Activated CD4-positive, alpha-beta T cell treated with anti-CD3 and anti-CD28 coated beads for 36 hours (primary cell): ENCODE measurements at regions of chr19 and their contacts with region 1.

Region 1: DNA sequence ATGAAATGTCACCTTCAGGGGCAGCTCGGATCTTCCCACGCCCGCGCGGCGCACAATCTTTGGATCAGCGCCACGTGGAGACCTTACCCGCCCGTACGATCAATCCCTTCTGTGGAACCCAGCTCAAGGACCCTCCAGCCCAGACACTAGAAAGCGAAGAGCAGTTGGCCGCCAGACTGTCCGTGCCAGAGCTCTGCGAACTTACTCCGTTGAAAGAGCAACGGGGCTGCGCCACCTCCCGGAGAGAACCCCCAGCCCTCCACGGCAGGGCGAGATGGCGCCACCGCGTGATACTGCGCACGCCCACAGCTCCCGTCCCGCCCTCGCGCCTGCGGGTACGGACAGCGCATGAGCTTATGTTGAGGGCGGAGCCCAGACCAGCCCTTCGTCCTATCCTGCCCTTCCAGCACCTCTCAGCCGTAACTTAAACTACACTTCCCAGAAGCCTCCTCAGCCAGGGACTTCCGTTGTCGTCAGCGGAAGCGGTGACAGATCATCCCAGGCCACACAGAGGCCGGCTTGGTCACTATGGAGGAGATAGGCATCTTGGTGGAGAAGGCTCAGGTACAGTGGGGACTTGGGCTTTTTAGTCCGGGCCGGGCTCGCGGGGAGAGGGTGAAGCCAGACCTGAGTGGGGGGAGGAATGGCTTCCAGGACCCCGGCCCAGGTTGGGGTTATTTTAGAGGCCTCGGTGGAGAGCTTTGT is at the start of gene PSMC4:
- DNase-seq: peak; percentile 99
- ATAC-seq: peak; percentile 95
- H3K4me3 Mint-ChIP-seq: peak within 1 kb of the TSS; percentile 89
- H3K27ac Mint-ChIP-seq: peak within 1 kb of the TSS; percentile 96
- H3K4me1 Mint-ChIP-seq: peaks cover 47% of the 10 kb centered on the region
- H3K27me3 Mint-ChIP-seq: no peaks in the 10 kb centered on the region
- total RNA-seq, gene PSMC4: 114 to 140 TPM

Region 2: GRCh38 chr19:39296055-39296645 is 674.7 kb before region 1 on chr19 and contains the start of gene IFNL1:
- CTCF ChIA-PET with region 1: no interaction called
- POLR2A ChIA-PET with region 1: no interaction called
- intact Hi-C with region 1: no loop called
- DNase-seq: peak; percentile 39
- ATAC-seq: no peak
- H3K4me3 Mint-ChIP-seq: no peak within 1 kb of the TSS
- H3K27ac Mint-ChIP-seq: peak within 1 kb of the TSS; percentile 26
- H3K4me1 Mint-ChIP-seq: peaks cover 9% of the 10 kb centered on the region
- H3K27me3 Mint-ChIP-seq: peaks cover 4% of the 10 kb centered on the region
- total RNA-seq, gene IFNL1: 0.50 to 0.51 TPM

Region 3: GRCh38 chr19:39778763-39779162 is 192.1 kb before region 1 on chr19 and contains the start of gene LEUTX:
- CTCF ChIA-PET with region 1: no interaction called
- POLR2A ChIA-PET with region 1: no interaction called
- intact Hi-C with region 1: no loop called
- DNase-seq: peak; percentile 44
- ATAC-seq: peak; percentile 78
- H3K4me3 Mint-ChIP-seq: no peak within 1 kb of the TSS
- H3K27ac Mint-ChIP-seq: no peak within 1 kb of the TSS
- H3K4me1 Mint-ChIP-seq: no peaks in the 10 kb centered on the region
- H3K27me3 Mint-ChIP-seq: peaks cover 22% of the 10 kb centered on the region
- total RNA-seq, gene LEUTX: not detected

Region 4: GRCh38 chr19:39792999-39793546 is 177.8 kb before region 1 on chr19:
- CTCF ChIA-PET with region 1: interaction called, 6 read pairs
- POLR2A ChIA-PET with region 1: no interaction called
- intact Hi-C with region 1: loop called in 1 of 2 experiments (anchors 2 kb)
- DNase-seq: peak; percentile 87
- ATAC-seq: peak; percentile 97
- H3K4me3 Mint-ChIP-seq: peak overlapping the region; percentile 68
- H3K27ac Mint-ChIP-seq: no peak overlapping the region
- H3K4me1 Mint-ChIP-seq: no peaks in the 10 kb centered on the region
- H3K27me3 Mint-ChIP-seq: peaks cover 5% of the 10 kb centered on the region

Region 5: GRCh38 chr19:39833464-39834286 is 137.2 kb before region 1 on chr19 and contains the start of gene DYRK1B:
- CTCF ChIA-PET with region 1: no interaction called
- POLR2A ChIA-PET with region 1: no interaction called
- intact Hi-C with region 1: loop called in 1 of 2 experiments (anchors 1 kb)
- DNase-seq: peak; percentile 99
- ATAC-seq: peak; percentile 92
- H3K4me3 Mint-ChIP-seq: peak within 1 kb of the TSS; percentile 64
- H3K27ac Mint-ChIP-seq: peak within 1 kb of the TSS; percentile 84
- H3K4me1 Mint-ChIP-seq: peaks cover 25% of the 10 kb centered on the region
- H3K27me3 Mint-ChIP-seq: no peaks in the 10 kb centered on the region
- total RNA-seq, gene DYRK1B: 4.8 to 6.9 TPM

Region 6: GRCh38 chr19:39889872-39890545 is 80.8 kb before region 1 on chr19:
- CTCF ChIA-PET with region 1: interaction called, 6 read pairs
- POLR2A ChIA-PET with region 1: no interaction called
- intact Hi-C with region 1: loop called (anchors 5 to 10 kb)
- DNase-seq: no peak
- ATAC-seq: no peak
- H3K4me3 Mint-ChIP-seq: no peak overlapping the region
- H3K27ac Mint-ChIP-seq: no peak overlapping the region
- H3K4me1 Mint-ChIP-seq: no peaks in the 10 kb centered on the region
- H3K27me3 Mint-ChIP-seq: no peaks in the 10 kb centered on the region

Region 7: GRCh38 chr19:39953915-39954314 is 16.9 kb before region 1 on chr19:
- CTCF ChIA-PET with region 1: interaction called, 12 read pairs
- POLR2A ChIA-PET with region 1: interaction called, 4 read pairs
- intact Hi-C with region 1: no loop called
- DNase-seq: no peak
- ATAC-seq: peak; percentile 4
- H3K4me3 Mint-ChIP-seq: peak overlapping the region; percentile 15
- H3K27ac Mint-ChIP-seq: peak overlapping the region; percentile 81
- H3K4me1 Mint-ChIP-seq: peaks cover 71% of the 10 kb centered on the region
- H3K27me3 Mint-ChIP-seq: no peaks in the 10 kb centered on the region

Region 8: GRCh38 chr19:40055832-40056504 is 85.1 kb after region 1 on chr19 and contains the start of gene ZNF780B:
- CTCF ChIA-PET with region 1: interaction called, 7 read pairs
- POLR2A ChIA-PET with region 1: interaction called, 3 read pairs
- intact Hi-C with region 1: loop called in 1 of 2 experiments (anchors 1 kb)
- DNase-seq: peak; percentile 84
- ATAC-seq: peak; percentile 93
- H3K4me3 Mint-ChIP-seq: peak within 1 kb of the TSS; percentile 93
- H3K27ac Mint-ChIP-seq: peak within 1 kb of the TSS; percentile 97
- H3K4me1 Mint-ChIP-seq: peaks cover 38% of the 10 kb centered on the region
- H3K27me3 Mint-ChIP-seq: peaks cover 8% of the 10 kb centered on the region
- total RNA-seq, gene ZNF780B: 17.4 to 18.8 TPM

Region 9: GRCh38 chr19:40190891-40191835 is 220.3 kb after region 1 on chr19 and contains the start of gene MAP3K10:
- CTCF ChIA-PET with region 1: no interaction called
- POLR2A ChIA-PET with region 1: interaction called, 4 read pairs
- intact Hi-C with region 1: loop called in 1 of 2 experiments (anchors 1 kb)
- DNase-seq: peak; percentile 89
- ATAC-seq: peak; percentile 88
- H3K4me3 Mint-ChIP-seq: peak within 1 kb of the TSS; percentile 80
- H3K27ac Mint-ChIP-seq: peak within 1 kb of the TSS; percentile 92
- H3K4me1 Mint-ChIP-seq: peaks cover 20% of the 10 kb centered on the region
- H3K27me3 Mint-ChIP-seq: no peaks in the 10 kb centered on the region
- total RNA-seq, gene MAP3K10: 8.7 to 10.8 TPM